Common myeloid progenitor, CD34-positive (primary cell): ENCODE measurements at regions of chr10 and their contacts with region 1.

Region 1: DNA sequence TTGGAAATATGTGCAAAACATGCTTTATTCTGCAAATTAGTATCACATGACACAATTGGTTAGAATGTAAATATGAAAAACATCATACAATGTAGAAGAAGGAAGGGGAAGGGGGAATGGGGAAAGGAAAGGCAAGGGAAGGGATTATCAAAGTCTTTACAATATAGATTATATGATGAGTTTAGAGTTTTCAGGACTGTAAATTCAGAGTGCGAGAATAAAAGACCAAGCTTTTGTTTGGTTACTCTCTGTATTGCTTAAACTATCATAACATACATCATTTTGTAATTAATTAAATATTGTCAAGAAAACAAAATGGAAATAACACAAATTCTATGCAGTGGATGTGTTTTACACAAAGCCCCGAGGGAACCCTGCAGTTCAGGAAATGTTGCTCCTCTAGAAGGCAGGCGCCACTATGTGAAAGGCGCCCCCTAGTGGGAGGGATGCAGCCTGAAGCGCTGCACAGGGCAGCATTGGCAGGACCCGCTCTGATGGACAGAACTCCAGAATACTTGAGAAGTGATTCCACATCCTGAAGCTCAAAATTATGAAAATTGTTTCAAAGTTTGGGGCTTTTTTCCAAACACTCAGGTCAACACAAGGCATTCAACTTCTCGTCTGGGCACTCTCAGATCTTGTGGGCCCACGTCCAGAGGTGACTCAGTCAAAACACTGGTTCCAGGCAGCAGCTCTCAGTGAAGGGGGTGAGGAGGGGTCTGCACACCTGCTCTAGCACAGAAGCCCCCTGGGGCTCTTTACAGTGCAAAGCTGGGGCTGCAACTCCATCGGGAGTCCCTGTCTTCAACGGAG is 31.6 kb upstream of the TMEM254 start:
- DNase-seq: peak; percentile 61 to 78 (median 76)
- H3K4me3 ChIP-seq: no peak overlapping the region
- H3K27ac ChIP-seq: no peak overlapping the region
- H3K4me1 ChIP-seq: no peaks in the 10 kb centered on the region
- H3K27me3 ChIP-seq: peaks cover 0 to 3% (median 0%) of the 10 kb centered on the region in 5 experiments

Region 2: GRCh38 chr10:80064120-80064886 is 17.5 kb after region 1 on chr10:
- CTCF ChIA-PET with region 1: interaction called, 11 read pairs
- POLR2A ChIA-PET with region 1: interaction called, 3 read pairs
- DNase-seq: no peak
- H3K4me3 ChIP-seq: no peak overlapping the region
- H3K27ac ChIP-seq: no peak overlapping the region
- H3K4me1 ChIP-seq: no peaks in the 10 kb centered on the region
- H3K27me3 ChIP-seq: no peaks in the 10 kb centered on the region